ENCODE measurements at regions of chr15 and their contacts with region 1.

Region 1: DNA sequence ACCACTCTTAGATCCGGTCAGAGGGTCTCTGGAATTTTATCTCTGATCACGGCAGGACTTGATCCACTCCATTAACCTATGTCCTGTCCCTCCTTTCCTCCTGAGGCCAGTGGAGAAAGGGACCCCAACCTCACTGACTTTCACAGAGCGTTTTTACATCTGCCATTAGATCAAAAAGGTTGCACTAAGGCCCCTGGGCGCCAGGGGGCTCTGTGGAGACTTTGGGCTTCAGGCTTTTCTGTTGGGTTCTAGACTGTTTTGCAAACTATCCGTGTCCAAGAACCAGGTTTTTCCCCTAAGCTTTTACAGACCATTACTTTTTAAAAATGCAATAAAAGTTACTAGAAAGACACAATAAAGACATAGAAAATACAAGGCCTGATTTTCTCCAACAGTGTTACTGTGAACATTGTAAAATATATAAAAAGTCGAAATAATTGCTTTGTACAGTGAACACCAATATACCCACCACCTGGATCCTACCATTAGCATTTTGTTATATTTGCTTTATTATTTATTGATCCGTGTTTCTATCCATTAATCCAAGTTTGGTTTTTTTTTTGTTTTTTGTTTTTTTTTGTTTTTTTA is 159.7 kb downstream of the POLR2M start:
- DNase-seq: peak; percentile 77
- ATAC-seq: peak; percentile 72 to 83
- H3K4me3 ChIP-seq: no peak overlapping the region
- H3K27ac ChIP-seq: no peak overlapping the region
- H3K4me1 ChIP-seq: no peaks in the 10 kb centered on the region
- H3K27me3 ChIP-seq: no peaks in the 10 kb centered on the region
- CTCF ChIP-seq: peak; percentile 58

Region 2: GRCh38 chr15:57751177-57751800 is 115.0 kb before region 1 on chr15:
- intact Hi-C with region 1: loop called (anchors 10 kb)
- DNase-seq: no peak
- ATAC-seq: no peak
- H3K4me3 ChIP-seq: no peak overlapping the region
- H3K27ac ChIP-seq: no peak overlapping the region
- H3K4me1 ChIP-seq: peaks cover 5% of the 10 kb centered on the region
- H3K27me3 ChIP-seq: no peaks in the 10 kb centered on the region
- CTCF ChIP-seq: peak; percentile 47

Region 3: GRCh38 chr15:58066042-58066867 is 200.0 kb after region 1 on chr15:
- intact Hi-C with region 1: loop called (anchors 10 kb)
- DNase-seq: peak; percentile 81
- ATAC-seq: peak; percentile 97
- H3K4me3 ChIP-seq: peak overlapping the region; percentile 62
- H3K27ac ChIP-seq: no peak overlapping the region
- H3K4me1 ChIP-seq: peaks cover 18% of the 10 kb centered on the region
- H3K27me3 ChIP-seq: peaks cover 57% of the 10 kb centered on the region
- CTCF ChIP-seq: peak; percentile 90